ENCODE measurements at regions of chr19 and their contacts with region 1.

Region 1: GRCh38 chr19:50922317-50922853 is 11.2 kb upstream of the KLK4 start:
- DNase-seq: peak; percentile 89
- ATAC-seq: peak; percentile 99
- H3K4me3 ChIP-seq: no peak overlapping the region
- H3K4me3 Mint-ChIP-seq: peak overlapping the region; percentile 36
- H3K27ac ChIP-seq: no peak overlapping the region
- H3K27ac Mint-ChIP-seq: peak overlapping the region; percentile 37
- H3K4me1 ChIP-seq: peaks cover 8 to 11% of the 10 kb centered on the region in 2 donors
- H3K4me1 Mint-ChIP-seq: peaks cover 11% of the 10 kb centered on the region
- H3K27me3 ChIP-seq: peaks cover 0 to 11% (median 5%) of the 10 kb centered on the region in 4 experiments
- H3K27me3 Mint-ChIP-seq: peaks cover 42% of the 10 kb centered on the region
- CTCF ChIP-seq: peak; percentile 91

Region 2: DNA sequence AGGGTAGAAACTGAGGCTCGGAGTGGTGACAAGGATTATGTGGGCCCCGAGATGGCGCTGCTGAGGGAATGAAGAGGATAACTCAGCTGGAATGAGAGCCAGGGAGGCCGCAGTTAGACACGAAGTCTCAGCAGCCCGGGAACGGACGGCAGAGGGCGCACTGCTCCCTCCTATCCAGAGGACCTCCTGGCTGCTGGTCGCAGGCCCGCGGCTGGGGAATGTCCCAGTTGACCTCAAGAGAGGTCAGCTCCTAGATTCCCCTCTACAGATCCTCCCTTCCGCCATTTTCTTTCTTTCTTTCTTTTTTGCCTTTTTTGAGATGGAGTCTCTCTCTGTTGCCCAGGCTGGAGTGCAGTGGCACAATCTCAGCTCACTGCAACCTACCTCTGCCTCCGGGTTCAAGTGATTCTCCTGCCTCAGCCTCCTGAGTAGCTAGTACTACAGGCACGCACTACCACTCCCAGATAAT is 384.6 kb before region 1 on chr19:
- CTCF ChIA-PET with region 1: interaction called, 17 read pairs
- POLR2A ChIA-PET with region 1: no interaction called
- intact Hi-C with region 1: no loop called
- DNase-seq: peak; percentile 66
- ATAC-seq: peak; percentile 36
- H3K4me3 ChIP-seq: no peak overlapping the region
- H3K4me3 Mint-ChIP-seq: no peak overlapping the region
- H3K27ac ChIP-seq: no peak overlapping the region
- H3K27ac Mint-ChIP-seq: no peak overlapping the region
- H3K4me1 ChIP-seq: no peaks in the 10 kb centered on the region
- H3K4me1 Mint-ChIP-seq: no peaks in the 10 kb centered on the region
- H3K27me3 ChIP-seq: peaks cover 0 to 8% (median 0%) of the 10 kb centered on the region in 4 experiments
- H3K27me3 Mint-ChIP-seq: peaks cover 13% of the 10 kb centered on the region
- CTCF ChIP-seq: peak; percentile 74

Region 3: GRCh38 chr19:50705422-50706019 is 216.9 kb before region 1 on chr19:
- CTCF ChIA-PET with region 1: interaction called, 5 read pairs
- POLR2A ChIA-PET with region 1: no interaction called
- intact Hi-C with region 1: loop called (anchors 1 kb)
- DNase-seq: peak; percentile 57
- ATAC-seq: peak; percentile 58
- H3K4me3 ChIP-seq: no peak overlapping the region
- H3K4me3 Mint-ChIP-seq: no peak overlapping the region
- H3K27ac ChIP-seq: no peak overlapping the region
- H3K27ac Mint-ChIP-seq: no peak overlapping the region
- H3K4me1 ChIP-seq: no peaks in the 10 kb centered on the region
- H3K4me1 Mint-ChIP-seq: no peaks in the 10 kb centered on the region
- H3K27me3 ChIP-seq: peaks cover 0 to 41% (median 5%) of the 10 kb centered on the region in 4 experiments
- H3K27me3 Mint-ChIP-seq: peaks cover 39% of the 10 kb centered on the region
- CTCF ChIP-seq: peak; percentile 51

Region 4: GRCh38 chr19:50759886-50760285 is 162.5 kb before region 1 on chr19:
- CTCF ChIA-PET with region 1: no interaction called
- POLR2A ChIA-PET with region 1: no interaction called
- intact Hi-C with region 1: no loop called
- DNase-seq: peak; percentile 24
- ATAC-seq: no peak
- H3K4me3 ChIP-seq: no peak overlapping the region
- H3K4me3 Mint-ChIP-seq: no peak overlapping the region
- H3K27ac ChIP-seq: no peak overlapping the region
- H3K27ac Mint-ChIP-seq: no peak overlapping the region
- H3K4me1 ChIP-seq: no peaks in the 10 kb centered on the region
- H3K4me1 Mint-ChIP-seq: no peaks in the 10 kb centered on the region
- H3K27me3 ChIP-seq: no peaks in the 10 kb centered on the region
- H3K27me3 Mint-ChIP-seq: peaks cover 17% of the 10 kb centered on the region
- CTCF ChIP-seq: no peak

Region 5: GRCh38 chr19:50794439-50795237 is 127.7 kb before region 1 on chr19:
- CTCF ChIA-PET with region 1: interaction called, 29 read pairs
- POLR2A ChIA-PET with region 1: no interaction called
- intact Hi-C with region 1: loop called (anchors 2 kb)
- DNase-seq: peak; percentile 47
- ATAC-seq: peak; percentile 58
- H3K4me3 ChIP-seq: no peak overlapping the region
- H3K4me3 Mint-ChIP-seq: no peak overlapping the region
- H3K27ac ChIP-seq: no peak overlapping the region
- H3K27ac Mint-ChIP-seq: peak overlapping the region; percentile 20
- H3K4me1 ChIP-seq: peaks cover 4 to 6% of the 10 kb centered on the region in 2 donors
- H3K4me1 Mint-ChIP-seq: peaks cover 10% of the 10 kb centered on the region
- H3K27me3 ChIP-seq: no peaks in the 10 kb centered on the region
- H3K27me3 Mint-ChIP-seq: peaks cover 5% of the 10 kb centered on the region
- CTCF ChIP-seq: peak; percentile 19

Region 6: GRCh38 chr19:50835785-50836542 is 86.4 kb before region 1 on chr19:
- CTCF ChIA-PET with region 1: interaction called, 11 read pairs
- POLR2A ChIA-PET with region 1: no interaction called
- intact Hi-C with region 1: no loop called
- DNase-seq: peak; percentile 84
- ATAC-seq: peak; percentile 94
- H3K4me3 ChIP-seq: peak overlapping the region in 4 of 5 experiments; percentile 51 to 67 (median 59)
- H3K4me3 Mint-ChIP-seq: peak overlapping the region; percentile 88
- H3K27ac ChIP-seq: no peak overlapping the region
- H3K27ac Mint-ChIP-seq: peak overlapping the region; percentile 73
- H3K4me1 ChIP-seq: peaks cover 11 to 14% of the 10 kb centered on the region in 2 donors
- H3K4me1 Mint-ChIP-seq: peaks cover 26% of the 10 kb centered on the region
- H3K27me3 ChIP-seq: peaks cover 0 to 48% (median 2%) of the 10 kb centered on the region in 4 experiments
- H3K27me3 Mint-ChIP-seq: peaks cover 45% of the 10 kb centered on the region
- CTCF ChIP-seq: no peak

Region 7: DNA sequence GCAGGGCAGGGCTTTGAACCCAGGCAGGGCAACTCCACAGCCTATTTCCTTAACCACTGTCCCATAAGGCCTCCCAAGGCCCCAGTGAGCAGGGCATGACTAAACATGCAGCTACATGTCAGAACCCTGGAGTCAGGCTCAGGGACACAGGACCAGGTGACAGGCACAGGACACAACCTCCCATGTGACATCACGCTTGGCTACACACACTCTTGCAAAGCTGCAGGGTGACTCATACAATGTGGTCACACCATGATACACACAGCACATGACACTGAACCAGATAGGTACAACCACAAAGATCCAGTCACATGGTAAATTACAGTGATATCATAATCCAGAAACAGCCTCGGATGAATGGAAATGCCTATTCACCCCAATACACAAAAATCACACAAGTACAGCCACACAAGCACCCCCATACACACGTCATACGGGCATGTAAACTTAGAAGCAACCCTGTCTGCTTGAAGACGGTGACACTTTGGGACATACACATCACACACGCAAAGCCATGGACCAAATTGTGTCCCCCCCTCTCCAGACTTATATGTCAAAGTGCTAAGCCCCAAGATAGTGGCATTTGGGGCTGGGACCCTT is 25.7 kb before region 1 on chr19:
- CTCF ChIA-PET with region 1: interaction called, 10 read pairs
- POLR2A ChIA-PET with region 1: no interaction called
- intact Hi-C with region 1: loop called (anchors 1 kb)
- DNase-seq: peak; percentile 90
- ATAC-seq: peak; percentile 90
- H3K4me3 ChIP-seq: no peak overlapping the region
- H3K4me3 Mint-ChIP-seq: peak overlapping the region; percentile 66
- H3K27ac ChIP-seq: peak overlapping the region; percentile 78 to 84
- H3K27ac Mint-ChIP-seq: peak overlapping the region; percentile 94
- H3K4me1 ChIP-seq: peaks cover 20 to 26% of the 10 kb centered on the region in 2 donors
- H3K4me1 Mint-ChIP-seq: peaks cover 53% of the 10 kb centered on the region
- H3K27me3 ChIP-seq: no peaks in the 10 kb centered on the region
- H3K27me3 Mint-ChIP-seq: no peaks in the 10 kb centered on the region
- CTCF ChIP-seq: no peak